ENCODE measurements at regions of chr13 and their contacts with region 1.

Region 1: DNA sequence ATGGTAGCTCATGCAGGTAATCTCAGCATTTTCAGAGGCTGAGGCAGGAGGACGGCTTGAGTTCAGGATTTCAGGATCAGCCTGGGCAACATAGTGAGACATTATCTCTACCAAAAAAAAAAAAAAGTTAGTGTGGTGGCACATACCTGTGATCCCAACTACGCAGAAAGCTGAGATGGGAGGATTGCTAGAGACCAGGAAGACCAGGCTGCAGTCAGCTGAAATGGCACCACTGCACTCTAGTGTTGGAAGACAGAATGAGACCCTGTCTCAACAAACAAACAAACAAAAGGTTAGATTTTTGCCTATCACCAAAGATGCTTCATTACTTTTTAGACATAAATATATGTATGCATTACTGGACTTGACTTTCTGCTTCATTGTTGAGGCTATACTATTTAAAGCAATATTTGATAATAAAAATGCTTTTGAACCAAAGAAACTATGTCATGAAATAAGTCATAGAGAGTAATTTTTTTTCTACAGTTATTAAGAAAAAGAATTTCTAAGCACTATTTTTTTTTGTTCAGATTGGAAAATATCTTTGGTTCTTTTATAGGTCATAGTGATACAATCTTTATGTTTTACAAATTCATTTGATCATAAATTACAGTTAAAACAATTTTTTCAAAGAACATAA is 1180.1 kb upstream of the ATXN8OS start:
- DNase-seq: peak; percentile 66
- ATAC-seq: peak; percentile 100
- H3K4me3 Mint-ChIP-seq: no peak overlapping the region
- H3K27ac Mint-ChIP-seq: no peak overlapping the region
- H3K4me1 Mint-ChIP-seq: no peaks in the 10 kb centered on the region
- H3K27me3 Mint-ChIP-seq: no peaks in the 10 kb centered on the region
- CTCF ChIP-seq: peak; percentile 45; the same call in 1 of the 2 replicates

Region 2: DNA sequence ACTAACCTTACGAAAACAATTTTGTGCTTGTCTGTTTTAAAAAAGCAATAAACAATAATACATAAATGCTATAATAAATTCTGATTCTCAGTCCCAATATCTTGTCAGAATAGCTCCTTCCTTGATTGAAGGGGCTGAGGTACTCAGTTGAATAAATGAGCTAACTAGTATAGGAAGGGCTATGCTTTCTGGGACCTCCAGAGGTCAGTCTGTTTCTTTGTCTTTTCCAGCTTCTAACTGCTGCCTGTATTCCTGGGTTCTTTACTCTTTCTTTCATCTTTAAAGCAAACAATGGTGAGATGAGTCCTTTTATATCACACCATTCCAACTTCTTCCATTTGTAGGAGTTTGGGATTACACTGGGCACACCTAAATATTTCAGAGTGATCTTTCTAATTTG is 116.8 kb before region 1 on chr13:
- CTCF ChIA-PET with region 1: interaction called, 14 read pairs
- POLR2A ChIA-PET with region 1: no interaction called
- DNase-seq: no peak
- ATAC-seq: peak; percentile 99
- H3K4me3 Mint-ChIP-seq: no peak overlapping the region
- H3K27ac Mint-ChIP-seq: no peak overlapping the region
- H3K4me1 Mint-ChIP-seq: peaks cover 5% of the 10 kb centered on the region
- H3K27me3 Mint-ChIP-seq: no peaks in the 10 kb centered on the region
- CTCF ChIP-seq: 0 out of 2 replicates have a peak, but pooled peaks have one; percentile 13